MCF 10A (cell line): ENCODE measurements at regions of chr4 and their contacts with region 1.

Region 1: GRCh38 chr4:172202480-172203076 is 389.4 kb downstream of the GALNTL6 start:
- DNase-seq: peak; percentile 38
- H3K4me3 Mint-ChIP-seq: no peak overlapping the region
- H3K27ac Mint-ChIP-seq: no peak overlapping the region
- H3K4me1 Mint-ChIP-seq: no peaks in the 10 kb centered on the region
- H3K27me3 Mint-ChIP-seq: peaks cover 50% of the 10 kb centered on the region
- CTCF ChIP-seq: peak; percentile 74

Region 2: GRCh38 chr4:170990989-170991589 is 1211.5 kb before region 1 on chr4:
- CTCF ChIA-PET with region 1: interaction called, 9 read pairs
- POLR2A ChIA-PET with region 1: no interaction called
- intact Hi-C with region 1: loop called (anchors 10 kb)
- DNase-seq: peak; percentile 63
- H3K4me3 Mint-ChIP-seq: no peak overlapping the region
- H3K27ac Mint-ChIP-seq: no peak overlapping the region
- H3K4me1 Mint-ChIP-seq: no peaks in the 10 kb centered on the region
- H3K27me3 Mint-ChIP-seq: no peaks in the 10 kb centered on the region
- CTCF ChIP-seq: peak; percentile 52

Region 3: DNA sequence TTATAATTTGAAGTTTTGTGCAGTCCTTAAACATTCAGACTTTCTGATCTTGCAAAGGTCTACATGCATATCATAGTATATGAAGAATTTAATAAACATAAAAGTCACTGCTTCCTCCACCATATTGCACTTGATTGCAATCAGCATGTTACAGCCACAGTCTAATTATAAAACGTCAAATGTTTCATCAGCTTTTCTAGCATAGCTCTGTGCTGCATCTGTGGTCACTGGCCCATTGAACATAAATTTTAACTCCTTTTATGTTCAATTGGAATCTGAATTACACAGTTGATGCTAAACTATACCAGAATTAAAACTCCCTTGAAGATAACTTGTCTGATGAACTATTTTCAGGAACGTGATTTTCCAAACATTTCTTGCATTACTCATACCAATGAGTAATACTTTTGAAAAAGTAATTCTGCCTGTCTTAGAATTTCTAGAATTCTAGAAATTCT is 60.3 kb before region 1 on chr4:
- CTCF ChIA-PET with region 1: no interaction called
- POLR2A ChIA-PET with region 1: no interaction called
- intact Hi-C with region 1: no loop called
- DNase-seq: peak; percentile 3
- H3K4me3 Mint-ChIP-seq: no peak overlapping the region
- H3K27ac Mint-ChIP-seq: no peak overlapping the region
- H3K4me1 Mint-ChIP-seq: no peaks in the 10 kb centered on the region
- H3K27me3 Mint-ChIP-seq: peaks cover 82% of the 10 kb centered on the region
- CTCF ChIP-seq: no peak